Left colon (tissue), 2 donors: ENCODE measurements at regions of chr22 and their contacts with region 1.

Region 1: DNA sequence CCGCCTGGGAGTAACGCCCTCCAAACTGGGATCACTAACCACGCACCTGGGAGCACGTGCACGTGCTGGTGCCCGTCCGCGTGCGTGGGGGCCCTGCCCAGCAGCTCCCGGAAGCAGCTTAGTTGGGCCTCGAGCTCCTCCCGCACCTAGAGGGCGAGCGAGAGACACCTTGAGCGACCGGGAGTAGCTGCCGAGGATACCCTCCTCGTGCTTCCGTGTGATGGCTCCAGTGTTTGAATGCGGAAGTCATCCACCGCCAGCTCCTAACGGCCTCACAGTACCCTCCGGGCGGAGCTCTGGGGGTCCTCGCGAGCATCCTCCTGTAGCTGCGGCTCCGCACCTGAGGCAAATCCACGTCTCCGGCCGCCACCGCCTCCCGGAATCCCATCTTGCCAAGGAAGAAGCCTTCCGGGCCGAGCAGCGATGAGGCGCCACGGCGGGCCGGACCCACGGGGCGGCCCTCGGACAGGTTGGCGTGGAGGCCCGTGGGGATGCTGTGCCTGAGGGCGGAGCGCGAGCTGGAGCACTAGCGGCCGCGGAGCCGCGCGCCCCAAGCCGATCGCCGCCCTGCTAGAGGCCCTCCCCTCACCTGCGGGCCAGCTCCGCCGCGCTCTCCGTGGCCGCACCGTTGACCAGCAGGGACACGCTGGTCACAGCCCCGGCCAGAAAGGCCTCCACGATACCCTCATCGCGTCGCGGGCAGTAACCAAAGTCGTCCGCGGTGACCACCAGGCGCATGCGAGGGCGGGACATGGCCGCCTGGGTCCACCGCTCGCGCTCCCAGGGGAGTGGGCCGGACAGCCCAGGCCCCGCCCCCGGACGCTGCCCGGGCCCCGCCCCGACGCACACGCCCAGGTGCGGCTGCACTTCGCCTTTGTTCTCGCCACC is at the start of gene YDJC:
- DNase-seq: peak; percentile 92 to 97
- ATAC-seq: peak; percentile 92
- total RNA-seq, gene YDJC: 18.9 to 23.2 TPM

Region 2: GRCh38 chr22:21569459-21570170 is 59.9 kb before region 1 on chr22:
- intact Hi-C with region 1: loop called in 1 of 2 experiments (anchors 10 kb)
- DNase-seq: no peak
- ATAC-seq: no peak